HEK293T (cell line): ENCODE measurements at regions of chr17 and their contacts with region 1.

Region 1: GRCh38 chr17:43983515-43984411 is 20.7 kb upstream of the NAGS start:
- DNase-seq: peak; percentile 47

Region 2: DNA sequence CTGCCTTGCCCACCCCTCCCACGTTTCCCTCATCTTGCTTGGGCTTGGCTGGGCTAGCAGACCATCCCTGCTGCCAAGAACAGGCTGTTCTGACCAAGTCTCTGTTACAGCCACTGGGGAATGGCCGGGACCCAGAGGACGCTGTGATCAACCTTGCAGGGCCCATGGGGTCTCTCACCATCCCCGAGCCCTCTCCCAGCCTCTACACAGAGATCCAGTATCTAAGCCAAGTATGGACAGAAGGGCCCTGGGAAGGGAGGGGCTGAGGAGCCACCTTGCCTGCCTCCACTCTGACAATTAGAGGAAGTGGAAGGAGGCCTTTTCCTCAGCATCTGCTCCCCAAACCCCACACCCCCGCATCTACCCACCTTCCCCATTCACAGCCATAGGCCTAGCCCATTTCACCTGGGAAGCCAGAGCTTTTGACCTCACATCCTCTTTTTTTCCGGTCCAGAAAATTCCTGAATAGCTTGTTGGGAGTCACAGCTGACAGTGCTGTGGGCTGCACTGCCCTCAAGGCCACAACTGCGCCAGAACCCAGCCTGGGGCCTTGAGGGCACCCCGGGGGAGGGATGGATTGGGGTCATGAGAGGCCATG is 122.6 kb before region 1 on chr17:
- CTCF ChIA-PET with region 1: no interaction called
- POLR2A ChIA-PET with region 1: no interaction called
- DNase-seq: no peak

Region 3: GRCh38 chr17:43940630-43941029 is 43.1 kb before region 1 on chr17:
- CTCF ChIA-PET with region 1: interaction called, 20 read pairs
- POLR2A ChIA-PET with region 1: interaction called, 8 read pairs
- DNase-seq: peak; percentile 61

Region 4: GRCh38 chr17:43967251-43967875 is 16.4 kb before region 1 on chr17:
- CTCF ChIA-PET with region 1: interaction called, 11 read pairs
- POLR2A ChIA-PET with region 1: interaction called, 3 read pairs
- DNase-seq: no peak

Region 5: DNA sequence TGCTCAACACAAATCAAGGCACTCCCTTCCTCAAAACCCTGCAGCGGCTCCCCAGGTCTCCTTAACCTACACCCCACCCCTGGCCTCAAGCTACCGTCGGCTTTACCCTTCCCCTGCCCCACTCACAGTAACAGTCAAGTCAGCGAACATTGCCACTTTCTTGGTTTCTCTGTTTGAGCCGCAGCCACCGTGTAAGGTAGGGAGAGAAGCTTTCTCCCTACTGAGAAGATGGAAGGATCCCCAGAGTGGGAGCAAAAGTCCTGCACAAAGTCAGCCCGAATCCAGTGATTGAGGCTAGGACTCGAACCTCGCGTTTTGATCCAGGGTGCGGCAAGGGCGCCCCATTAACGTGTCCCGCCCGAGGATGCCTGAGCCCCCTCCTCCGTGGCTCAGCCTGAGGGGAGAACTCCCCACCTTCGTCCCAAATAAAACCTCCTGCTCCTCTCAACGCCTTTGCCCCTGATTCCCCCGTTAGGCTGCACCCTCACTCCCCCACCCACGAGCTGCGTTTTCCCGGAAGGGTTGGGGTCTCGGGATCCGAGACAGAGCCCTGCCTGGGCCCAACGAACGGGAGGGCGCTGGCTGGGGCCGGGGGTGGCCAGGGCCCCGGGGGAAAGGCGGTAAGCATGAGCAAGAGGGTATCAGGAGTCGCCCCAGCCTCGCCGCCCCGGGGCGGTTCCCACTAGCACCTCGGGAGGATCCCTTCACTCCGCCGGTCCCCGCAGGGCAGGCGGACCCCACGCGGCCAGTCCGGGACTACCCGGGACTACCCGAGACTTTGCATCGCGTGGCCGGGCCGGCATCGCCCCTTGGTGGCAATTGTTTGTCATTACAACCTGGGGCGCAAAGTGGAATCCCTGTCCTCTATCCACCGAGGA is 10.7 kb after region 1 on chr17:
- CTCF ChIA-PET with region 1: interaction called, 4 read pairs
- POLR2A ChIA-PET with region 1: interaction called, 16 read pairs
- DNase-seq: peak; percentile 88